ENCODE measurements at regions of chr5 and their contacts with region 1.

Region 1: DNA sequence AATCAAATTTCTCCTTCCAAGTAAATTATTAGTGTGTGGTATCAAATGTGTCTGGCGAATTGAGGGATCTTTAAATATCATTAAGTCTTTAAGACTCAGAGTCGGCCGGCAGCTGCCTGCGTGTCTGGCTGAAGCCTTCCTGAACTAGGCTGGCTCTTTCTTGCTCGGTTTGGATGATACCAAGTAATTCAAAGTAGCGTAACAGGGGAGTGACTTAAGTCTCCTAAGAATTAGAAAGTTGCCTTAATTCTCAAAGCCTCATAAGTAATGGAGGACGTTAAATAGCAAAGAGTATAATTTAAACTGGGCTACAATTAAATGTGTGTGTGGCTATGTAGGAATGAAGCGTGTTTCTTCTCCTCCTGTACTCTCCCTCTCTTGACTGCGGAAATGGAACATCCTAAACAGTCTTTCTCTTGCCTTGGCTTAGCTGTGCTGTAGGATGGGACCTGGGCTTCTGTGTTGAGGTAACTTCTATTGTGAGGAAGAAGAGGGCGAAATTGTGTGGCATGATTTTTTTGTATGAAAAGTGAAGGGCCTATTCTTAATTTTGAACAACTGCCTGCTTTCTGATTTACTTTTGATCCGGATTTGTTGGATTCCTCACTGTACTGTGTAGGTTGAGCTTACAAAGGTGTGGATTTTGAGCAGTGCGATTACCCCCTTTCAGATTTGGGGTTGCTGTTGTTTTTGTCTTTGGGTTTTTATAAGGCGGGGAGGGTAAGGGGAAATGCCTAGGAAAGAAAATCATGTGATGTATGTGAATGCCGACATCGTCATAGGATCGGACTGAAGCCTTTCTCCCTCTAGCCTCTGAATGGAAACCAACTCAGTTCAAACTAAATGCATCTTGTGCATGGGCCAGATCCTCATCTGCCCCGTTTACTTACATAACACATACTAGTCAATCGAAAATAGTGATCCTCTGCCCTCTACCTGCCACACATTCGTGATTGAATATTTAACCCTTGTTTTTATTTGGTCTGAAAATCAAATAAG is 29.9 kb downstream of the CPEB4 start:
- DNase-seq: peak; percentile 65
- H3K4me3 Mint-ChIP-seq: no peak overlapping the region
- H3K27ac Mint-ChIP-seq: no peak overlapping the region
- H3K4me1 Mint-ChIP-seq: peaks cover 6% of the 10 kb centered on the region
- H3K27me3 Mint-ChIP-seq: no peaks in the 10 kb centered on the region

Region 2: DNA sequence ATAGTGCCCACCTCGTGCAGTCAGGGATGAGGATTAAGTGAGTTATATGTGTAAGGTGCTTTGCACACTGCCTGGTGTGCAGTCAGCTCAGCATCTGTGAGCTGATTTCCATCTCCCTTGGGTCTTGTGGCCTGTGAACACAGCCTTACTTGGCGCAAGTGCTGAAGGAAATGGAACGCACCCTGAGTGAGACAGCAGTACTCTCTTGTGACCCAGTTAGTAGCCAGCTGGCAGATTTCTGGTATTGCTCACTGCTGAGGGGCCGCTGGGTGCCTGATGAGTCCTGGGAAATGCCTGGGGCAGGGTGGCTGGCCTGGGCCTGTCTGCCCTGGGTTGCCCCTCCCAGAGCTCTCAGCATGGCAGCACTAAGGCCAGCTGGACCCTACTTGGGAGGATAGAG is 210.7 kb before region 1 on chr5:
- CTCF ChIA-PET with region 1: no interaction called
- POLR2A ChIA-PET with region 1: no interaction called
- intact Hi-C with region 1: no loop called
- DNase-seq: no peak
- H3K4me3 Mint-ChIP-seq: no peak overlapping the region
- H3K27ac Mint-ChIP-seq: no peak overlapping the region
- H3K4me1 Mint-ChIP-seq: no peaks in the 10 kb centered on the region
- H3K27me3 Mint-ChIP-seq: no peaks in the 10 kb centered on the region

Region 3: DNA sequence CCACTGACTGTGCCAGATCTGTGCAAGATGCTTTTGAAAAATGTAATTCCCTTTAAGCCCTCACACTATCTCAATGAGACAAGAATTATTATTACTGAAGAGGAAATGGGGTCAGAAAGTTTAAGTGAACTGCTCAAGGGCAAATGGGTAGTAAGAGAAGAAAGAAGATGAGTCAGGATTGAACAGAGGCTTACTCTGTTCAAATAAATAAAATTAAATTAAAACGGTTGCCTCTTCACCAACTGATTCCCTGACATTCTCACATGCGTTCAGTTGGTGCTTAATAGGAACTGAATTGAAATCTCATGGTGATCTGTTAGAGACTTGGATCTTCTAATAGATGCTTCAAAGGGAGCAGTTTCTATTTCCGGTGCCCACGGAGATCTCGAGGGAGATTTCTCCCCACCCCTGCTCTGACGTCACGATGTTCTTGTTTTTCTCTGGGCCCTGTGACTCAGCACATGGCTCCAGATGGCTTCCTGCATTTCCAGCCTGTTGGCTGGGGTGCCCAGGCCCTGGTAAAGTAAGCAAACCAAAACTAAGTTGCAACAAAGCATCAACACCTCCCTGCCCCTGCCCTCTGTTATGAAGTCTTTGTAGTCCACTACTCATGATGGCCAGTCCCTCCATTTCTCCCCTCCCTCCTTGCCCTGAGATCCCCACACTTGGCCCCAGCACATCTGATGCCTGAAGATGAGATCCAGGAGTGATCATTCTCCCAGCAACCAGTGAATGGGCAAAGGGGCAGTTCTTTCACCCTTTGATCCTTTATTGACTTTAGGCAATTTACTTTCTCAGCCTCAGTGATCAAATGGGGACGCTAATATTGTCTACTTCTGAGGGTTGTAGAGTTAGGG is 136.0 kb before region 1 on chr5:
- CTCF ChIA-PET with region 1: no interaction called
- POLR2A ChIA-PET with region 1: no interaction called
- intact Hi-C with region 1: loop called (anchors 5 kb)
- DNase-seq: peak; percentile 79
- H3K4me3 Mint-ChIP-seq: peak overlapping the region; percentile 30
- H3K27ac Mint-ChIP-seq: peak overlapping the region; percentile 93
- H3K4me1 Mint-ChIP-seq: peaks cover 33% of the 10 kb centered on the region
- H3K27me3 Mint-ChIP-seq: no peaks in the 10 kb centered on the region

Region 4: DNA sequence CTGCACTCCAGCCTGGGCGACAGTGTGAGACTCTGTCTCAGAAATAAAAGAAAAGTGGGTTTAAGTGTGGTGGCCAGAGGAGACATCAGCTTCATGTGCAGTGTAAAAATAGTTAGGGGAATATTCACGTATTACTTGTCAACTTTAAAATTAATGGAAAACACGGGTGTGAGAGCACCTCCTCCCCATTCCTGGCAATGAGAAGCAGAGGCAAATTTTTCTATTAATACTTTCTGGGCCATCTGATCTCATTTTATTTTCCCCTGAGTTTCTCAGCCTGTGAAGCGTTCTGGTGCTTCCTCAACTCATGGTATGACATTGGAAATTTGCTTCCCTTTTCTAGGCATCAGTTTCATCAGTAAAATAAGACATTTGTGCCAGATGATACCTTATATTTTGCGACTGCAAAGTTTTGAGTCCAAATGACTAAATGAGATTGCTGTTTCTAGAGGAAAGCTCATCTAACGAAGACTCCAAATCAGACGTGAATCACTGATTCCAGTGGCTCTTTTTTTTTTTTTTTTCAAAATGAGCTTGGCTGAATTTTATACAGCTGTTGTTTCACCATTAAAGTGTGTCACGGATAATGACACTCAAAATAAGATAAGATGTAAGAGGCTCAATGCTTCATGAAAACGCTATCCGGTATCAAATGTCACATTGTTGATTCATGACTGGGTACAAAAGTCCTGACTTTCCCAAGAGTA is 910.9 kb after region 1 on chr5:
- CTCF ChIA-PET with region 1: no interaction called
- POLR2A ChIA-PET with region 1: no interaction called
- intact Hi-C with region 1: no loop called
- DNase-seq: no peak
- H3K4me3 Mint-ChIP-seq: no peak overlapping the region
- H3K27ac Mint-ChIP-seq: no peak overlapping the region
- H3K4me1 Mint-ChIP-seq: no peaks in the 10 kb centered on the region
- H3K27me3 Mint-ChIP-seq: peaks cover 11% of the 10 kb centered on the region